ENCODE measurements at regions of chr22 and their contacts with region 1.

Region 1: GRCh38 chr22:22787786-22788459 is 99.7 kb upstream of the IGLL5 start:
- DNase-seq: peak; percentile 78
- ATAC-seq: peak; percentile 86
- H3K4me3 Mint-ChIP-seq: no peak overlapping the region
- H3K27ac Mint-ChIP-seq: peak overlapping the region; percentile 17
- H3K4me1 Mint-ChIP-seq: peaks cover 28% of the 10 kb centered on the region
- H3K27me3 Mint-ChIP-seq: peaks cover 3% of the 10 kb centered on the region

Region 2: DNA sequence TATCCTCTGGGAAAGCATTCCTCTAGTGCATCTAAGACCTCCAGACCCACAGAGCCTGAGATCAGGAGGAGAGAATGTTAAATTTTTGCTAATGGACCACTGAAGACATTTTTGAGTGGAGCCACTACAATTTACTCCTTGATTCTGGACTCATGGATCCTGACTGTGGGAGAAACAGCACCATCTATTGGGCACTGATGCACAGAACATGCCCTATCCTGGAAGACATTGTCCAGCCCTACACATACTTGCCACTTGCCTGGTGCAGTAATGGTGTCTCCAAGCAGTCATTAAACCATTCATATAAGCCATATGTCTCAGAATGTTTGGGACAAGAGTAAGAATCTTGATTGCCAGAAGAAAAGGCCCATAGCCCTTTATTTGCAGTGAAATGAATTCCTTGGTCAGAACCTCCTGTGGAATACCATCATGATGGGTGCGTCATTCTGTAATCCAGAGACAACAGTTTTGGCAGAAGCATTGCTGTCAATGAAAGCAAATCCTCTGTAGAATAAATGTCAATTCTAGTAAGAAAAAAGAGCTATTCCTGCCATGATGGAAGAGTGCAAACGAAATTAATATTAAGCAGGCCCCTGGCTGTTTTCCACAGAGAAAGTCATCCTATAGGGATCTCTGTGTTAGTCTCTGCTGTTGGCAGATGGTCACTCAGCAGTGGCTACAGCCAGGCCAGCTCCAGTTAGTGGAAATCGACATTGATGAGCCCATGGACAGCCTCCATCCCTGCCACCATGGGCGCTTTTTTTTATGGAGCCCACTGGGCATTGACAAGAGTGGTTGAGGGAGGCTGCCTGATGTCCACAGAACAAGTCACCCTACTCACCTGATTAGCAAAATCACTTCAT is 100.1 kb before region 1 on chr22:
- CTCF ChIA-PET with region 1: no interaction called
- DNase-seq: peak; percentile 50
- ATAC-seq: peak; percentile 80
- H3K4me3 Mint-ChIP-seq: no peak overlapping the region
- H3K27ac Mint-ChIP-seq: no peak overlapping the region
- H3K4me1 Mint-ChIP-seq: no peaks in the 10 kb centered on the region
- H3K27me3 Mint-ChIP-seq: no peaks in the 10 kb centered on the region

Region 3: GRCh38 chr22:22745225-22746060 is 42.5 kb before region 1 on chr22:
- CTCF ChIA-PET with region 1: interaction called, 10 read pairs
- DNase-seq: peak; percentile 61
- ATAC-seq: peak; percentile 70
- H3K4me3 Mint-ChIP-seq: no peak overlapping the region
- H3K27ac Mint-ChIP-seq: no peak overlapping the region
- H3K4me1 Mint-ChIP-seq: peaks cover 11% of the 10 kb centered on the region
- H3K27me3 Mint-ChIP-seq: peaks cover 33% of the 10 kb centered on the region

Region 4: GRCh38 chr22:22770280-22770871 is 17.5 kb before region 1 on chr22:
- CTCF ChIA-PET with region 1: interaction called, 14 read pairs
- DNase-seq: peak; percentile 54
- ATAC-seq: peak; percentile 53
- H3K4me3 Mint-ChIP-seq: no peak overlapping the region
- H3K27ac Mint-ChIP-seq: no peak overlapping the region
- H3K4me1 Mint-ChIP-seq: peaks cover 3% of the 10 kb centered on the region
- H3K27me3 Mint-ChIP-seq: peaks cover 10% of the 10 kb centered on the region

Region 5: GRCh38 chr22:22810018-22810427 is 22.1 kb after region 1 on chr22:
- CTCF ChIA-PET with region 1: interaction called, 57 read pairs
- DNase-seq: peak; percentile 84
- ATAC-seq: peak; percentile 98
- H3K4me3 Mint-ChIP-seq: no peak overlapping the region
- H3K27ac Mint-ChIP-seq: no peak overlapping the region
- H3K4me1 Mint-ChIP-seq: peaks cover 3% of the 10 kb centered on the region
- H3K27me3 Mint-ChIP-seq: peaks cover 17% of the 10 kb centered on the region

Region 6: GRCh38 chr22:22855617-22856308 is 67.8 kb after region 1 on chr22:
- CTCF ChIA-PET with region 1: interaction called, 27 read pairs
- DNase-seq: peak; percentile 64
- ATAC-seq: peak; percentile 86
- H3K4me3 Mint-ChIP-seq: no peak overlapping the region
- H3K27ac Mint-ChIP-seq: no peak overlapping the region
- H3K4me1 Mint-ChIP-seq: no peaks in the 10 kb centered on the region
- H3K27me3 Mint-ChIP-seq: peaks cover 33% of the 10 kb centered on the region

Region 7: GRCh38 chr22:22877523-22878210 is 89.7 kb after region 1 on chr22:
- CTCF ChIA-PET with region 1: interaction called, 26 read pairs
- DNase-seq: peak; percentile 81
- ATAC-seq: peak; percentile 51
- H3K4me3 Mint-ChIP-seq: no peak overlapping the region
- H3K27ac Mint-ChIP-seq: no peak overlapping the region
- H3K4me1 Mint-ChIP-seq: no peaks in the 10 kb centered on the region
- H3K27me3 Mint-ChIP-seq: peaks cover 17% of the 10 kb centered on the region

Measured in activated CD8-positive, alpha-beta memory T cell treated with anti-CD3 and anti-CD28 coated beads, Interleukin-2, amount 10 ng/mL, durations not matched to agents 7 days and 5 days (primary cell).